Endothelial cell of umbilical vein (primary cell): ENCODE measurements at regions of chr1 and their contacts with region 1.

Region 1: DNA sequence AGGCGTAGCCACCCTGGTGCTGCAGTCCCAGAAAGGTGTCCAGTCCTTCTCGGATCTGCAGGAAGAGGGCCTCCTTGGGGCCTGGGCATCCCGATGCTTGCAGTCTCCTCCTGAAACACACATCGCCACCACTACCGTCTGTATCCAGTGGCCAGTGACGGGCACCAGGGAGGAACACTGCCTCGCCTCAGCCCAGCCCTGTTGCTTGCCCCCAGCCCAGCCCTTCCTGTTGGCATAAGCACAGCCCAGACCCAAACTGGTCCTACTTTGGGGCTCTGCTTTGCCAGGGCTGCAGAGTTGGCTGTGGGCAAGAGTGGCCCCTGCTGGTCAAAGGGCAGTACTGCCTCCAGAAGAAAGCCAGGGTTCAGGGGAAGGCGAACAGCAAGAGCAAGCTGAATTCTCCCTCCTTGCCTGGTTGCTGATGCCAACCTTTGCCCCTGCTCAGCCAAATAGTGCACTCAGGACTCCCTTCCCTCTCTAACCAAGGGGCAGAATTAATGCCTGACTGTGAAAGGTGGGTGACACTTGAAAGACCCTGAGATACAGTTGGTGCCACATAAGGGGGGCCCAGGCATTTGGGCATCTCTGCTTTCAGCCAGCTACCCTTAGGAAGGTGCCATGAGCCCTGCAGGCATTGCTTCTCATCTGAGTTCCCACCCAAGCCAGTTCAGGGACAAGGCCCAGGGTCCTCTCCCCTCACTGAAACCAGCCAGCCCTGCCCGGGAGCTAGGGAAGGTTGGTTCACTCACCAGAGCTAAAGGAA is 11.1 kb upstream of the ARHGEF2 start:
- DNase-seq: peak; percentile 76
- H3K4me3 ChIP-seq: no peak overlapping the region
- H3K27ac ChIP-seq: no peak overlapping the region
- H3K4me1 ChIP-seq: peaks cover 6% of the 10 kb centered on the region
- H3K27me3 ChIP-seq: no peaks in the 10 kb centered on the region
- CTCF ChIP-seq: peak; percentile 95 to 98
- POLR2A ChIP-seq: no peak

Region 2: DNA sequence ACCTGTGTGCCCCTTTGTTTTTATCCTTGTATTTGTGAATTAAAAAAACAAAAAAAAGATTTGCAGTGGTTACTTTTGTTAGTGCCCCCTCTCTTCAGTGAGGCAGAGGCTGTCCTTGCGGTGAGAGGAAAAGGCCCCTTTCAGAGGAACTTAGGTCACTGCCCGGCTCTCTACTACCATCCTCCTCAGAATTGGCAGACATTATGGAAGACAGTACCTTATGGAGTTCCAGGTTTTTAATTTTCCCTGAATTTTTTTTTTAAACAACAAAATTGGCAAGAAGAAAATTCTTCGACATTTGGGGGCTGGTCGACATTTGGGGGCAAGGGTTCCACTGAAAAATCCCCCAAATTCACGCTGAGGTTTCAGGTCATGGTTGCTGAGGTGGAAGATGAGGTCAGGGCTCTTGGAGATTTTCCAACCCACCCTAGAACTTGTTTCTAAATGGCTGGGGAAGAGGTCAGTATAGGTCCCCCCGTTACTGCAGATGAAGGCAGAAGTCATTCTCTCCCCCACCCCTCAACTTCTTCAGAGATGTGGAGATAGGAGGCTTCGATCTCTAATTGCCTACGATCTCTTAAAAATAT is 42.7 kb before region 1 on chr1:
- CTCF ChIA-PET with region 1: interaction called, 30 read pairs
- POLR2A ChIA-PET with region 1: interaction called, 6 read pairs
- dilution Hi-C with region 1: no loop called
- intact Hi-C with region 1: no loop called
- DNase-seq: no peak
- H3K4me3 ChIP-seq: no peak overlapping the region
- H3K27ac ChIP-seq: no peak overlapping the region
- H3K4me1 ChIP-seq: peaks cover under 1% of the 10 kb centered on the region
- H3K27me3 ChIP-seq: no peaks in the 10 kb centered on the region
- CTCF ChIP-seq: no peak
- POLR2A ChIP-seq: no peak

Region 3: GRCh38 chr1:155961937-155962336 is 27.5 kb before region 1 on chr1:
- CTCF ChIA-PET with region 1: interaction called, 138 read pairs
- POLR2A ChIA-PET with region 1: interaction called, 4 read pairs
- dilution Hi-C with region 1: no loop called
- intact Hi-C with region 1: loop called (anchors 1 kb)
- DNase-seq: peak; percentile 91
- H3K4me3 ChIP-seq: no peak overlapping the region
- H3K27ac ChIP-seq: peak overlapping the region; percentile 86
- H3K4me1 ChIP-seq: peaks cover 22% of the 10 kb centered on the region
- H3K27me3 ChIP-seq: no peaks in the 10 kb centered on the region
- CTCF ChIP-seq: peak; percentile 44 to 61
- POLR2A ChIP-seq: peak; percentile 7

Region 4: DNA sequence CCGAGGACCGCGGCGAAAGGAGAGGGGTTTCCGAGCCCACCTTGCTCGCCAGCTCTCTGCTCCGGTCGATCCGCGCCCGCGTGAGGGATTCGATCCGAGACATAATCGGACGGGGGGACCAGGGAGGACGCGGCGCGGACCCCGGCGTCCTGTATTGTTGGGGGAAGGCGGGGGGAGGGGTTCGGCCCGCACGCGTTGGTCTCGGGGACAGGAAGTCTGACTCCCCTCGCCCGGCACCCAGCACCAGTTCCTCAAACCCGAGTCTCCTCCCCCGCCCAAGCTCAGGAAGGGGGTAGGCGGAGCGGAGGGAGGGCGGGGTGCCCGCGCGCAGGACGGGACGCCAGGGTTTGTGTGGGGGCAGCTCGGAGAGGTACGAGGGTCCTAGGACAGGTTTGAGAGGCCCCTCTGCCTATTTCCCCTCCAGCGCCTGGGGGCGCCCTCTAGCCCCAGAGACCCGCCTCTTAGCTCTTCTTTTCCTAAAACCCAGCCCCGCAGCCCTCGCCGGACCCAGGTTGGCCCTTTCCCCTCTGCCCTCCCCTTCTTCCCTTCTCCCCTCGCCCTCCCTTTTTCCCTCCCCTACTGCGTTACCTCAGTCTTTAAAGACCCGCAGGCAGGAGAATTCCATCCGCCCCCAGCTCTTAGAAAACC is 11.0 kb before region 1 on chr1 and contains the start of gene ARHGEF2:
- CTCF ChIA-PET with region 1: interaction called, 82 read pairs
- POLR2A ChIA-PET with region 1: no interaction called
- dilution Hi-C with region 1: no loop called
- intact Hi-C with region 1: no loop called
- DNase-seq: peak; percentile 50
- H3K4me3 ChIP-seq: peak within 1 kb of the TSS; percentile 43 to 80 (median 76)
- H3K27ac ChIP-seq: peak within 1 kb of the TSS; percentile 55
- H3K4me1 ChIP-seq: peaks cover 68% of the 10 kb centered on the region
- H3K27me3 ChIP-seq: no peaks in the 10 kb centered on the region
- CTCF ChIP-seq: peak in 1 of 2 donors; percentile 44
- POLR2A ChIP-seq: peak; percentile 72
- total RNA-seq, gene ARHGEF2: 110 and 118 TPM in 2 replicates

Region 5: DNA sequence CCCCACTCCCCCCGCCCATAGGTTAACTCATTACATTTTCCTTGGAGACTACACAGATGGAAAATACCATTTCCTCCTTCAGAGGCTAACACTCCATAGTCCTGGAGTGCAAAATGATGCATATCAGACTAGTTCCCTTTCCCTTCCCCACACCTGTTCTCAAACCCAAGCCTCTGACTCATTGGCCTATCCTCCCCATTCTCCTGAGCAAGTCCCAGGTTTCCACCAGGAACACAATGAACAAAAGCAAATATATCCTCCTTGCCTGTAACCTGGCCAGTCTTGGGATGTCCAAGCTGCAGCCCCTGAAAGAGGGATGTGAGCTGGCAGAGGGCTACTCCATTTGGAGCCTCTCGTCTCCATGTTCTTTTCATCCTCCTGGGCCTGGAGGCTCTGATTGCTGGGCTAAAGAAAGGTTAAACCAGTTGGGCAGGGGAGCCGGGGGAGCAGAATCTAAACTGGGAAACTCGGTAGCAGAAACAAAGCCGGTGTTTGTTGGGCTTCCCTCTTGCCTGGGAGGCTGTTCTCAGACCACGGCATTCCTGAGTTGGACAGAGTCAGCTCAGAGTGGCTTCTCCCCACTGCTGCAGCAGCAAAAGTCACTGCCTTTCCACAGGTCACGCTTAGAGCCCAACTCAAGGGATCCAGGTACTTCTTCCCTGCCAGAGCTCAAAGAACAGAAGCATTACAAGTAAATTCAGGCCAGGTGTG is 17.4 kb after region 1 on chr1:
- CTCF ChIA-PET with region 1: interaction called, 22 read pairs
- POLR2A ChIA-PET with region 1: no interaction called
- dilution Hi-C with region 1: no loop called
- intact Hi-C with region 1: no loop called
- DNase-seq: no peak
- H3K4me3 ChIP-seq: no peak overlapping the region
- H3K27ac ChIP-seq: no peak overlapping the region
- H3K4me1 ChIP-seq: no peaks in the 10 kb centered on the region
- H3K27me3 ChIP-seq: no peaks in the 10 kb centered on the region
- CTCF ChIP-seq: no peak
- POLR2A ChIP-seq: no peak